PC-3 (cell line): ENCODE measurements at regions of chr18 and their contacts with region 1.

Region 1: GRCh38 chr18:76922107-76922506 is 99.8 kb downstream of the ZNF236 start:
- DNase-seq: peak; percentile 38
- ATAC-seq: peak; percentile 92
- H3K4me3 ChIP-seq: no peak overlapping the region
- H3K27ac ChIP-seq: no peak overlapping the region
- H3K4me1 ChIP-seq: no peaks in the 10 kb centered on the region
- H3K27me3 ChIP-seq: no peaks in the 10 kb centered on the region
- CTCF ChIP-seq: peak; percentile 65

Region 2: GRCh38 chr18:76982841-76983587 is 60.9 kb after region 1 on chr18:
- CTCF ChIA-PET with region 1: no interaction called
- POLR2A ChIA-PET with region 1: no interaction called
- intact Hi-C with region 1: loop called (anchors 1 kb)
- DNase-seq: peak; percentile 91
- ATAC-seq: peak; percentile 98
- H3K4me3 ChIP-seq: peak overlapping the region; percentile 47
- H3K27ac ChIP-seq: no peak overlapping the region
- H3K4me1 ChIP-seq: peaks cover 5% of the 10 kb centered on the region
- H3K27me3 ChIP-seq: no peaks in the 10 kb centered on the region
- CTCF ChIP-seq: peak; percentile 91

Region 3: DNA sequence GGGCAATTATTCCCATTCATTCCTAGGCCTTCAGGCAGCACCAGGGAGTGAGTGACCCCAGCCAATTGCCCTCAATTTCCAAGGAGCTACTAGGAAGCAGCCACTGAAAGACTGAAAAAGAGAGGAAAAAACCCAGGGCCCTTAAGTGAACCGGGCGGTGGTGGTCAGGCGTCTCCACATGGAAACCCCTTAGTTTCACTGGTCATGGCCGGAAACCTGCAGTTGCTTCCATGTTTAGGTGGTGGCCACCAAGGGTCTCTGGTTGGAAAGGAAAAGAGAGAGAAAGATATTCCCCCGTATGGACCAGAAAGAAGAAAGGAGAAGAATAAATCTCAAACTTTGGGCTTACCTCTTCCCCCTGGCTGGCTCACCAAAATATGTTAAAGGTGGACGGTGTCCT is 392.4 kb after region 1 on chr18:
- CTCF ChIA-PET with region 1: no interaction called
- POLR2A ChIA-PET with region 1: no interaction called
- intact Hi-C with region 1: no loop called
- DNase-seq: no peak
- ATAC-seq: no peak
- H3K4me3 ChIP-seq: no peak overlapping the region
- H3K27ac ChIP-seq: no peak overlapping the region
- H3K4me1 ChIP-seq: no peaks in the 10 kb centered on the region
- H3K27me3 ChIP-seq: peaks cover 38% of the 10 kb centered on the region
- CTCF ChIP-seq: no peak